ENCODE measurements at regions of chr17 and their contacts with region 1.

Region 1: DNA sequence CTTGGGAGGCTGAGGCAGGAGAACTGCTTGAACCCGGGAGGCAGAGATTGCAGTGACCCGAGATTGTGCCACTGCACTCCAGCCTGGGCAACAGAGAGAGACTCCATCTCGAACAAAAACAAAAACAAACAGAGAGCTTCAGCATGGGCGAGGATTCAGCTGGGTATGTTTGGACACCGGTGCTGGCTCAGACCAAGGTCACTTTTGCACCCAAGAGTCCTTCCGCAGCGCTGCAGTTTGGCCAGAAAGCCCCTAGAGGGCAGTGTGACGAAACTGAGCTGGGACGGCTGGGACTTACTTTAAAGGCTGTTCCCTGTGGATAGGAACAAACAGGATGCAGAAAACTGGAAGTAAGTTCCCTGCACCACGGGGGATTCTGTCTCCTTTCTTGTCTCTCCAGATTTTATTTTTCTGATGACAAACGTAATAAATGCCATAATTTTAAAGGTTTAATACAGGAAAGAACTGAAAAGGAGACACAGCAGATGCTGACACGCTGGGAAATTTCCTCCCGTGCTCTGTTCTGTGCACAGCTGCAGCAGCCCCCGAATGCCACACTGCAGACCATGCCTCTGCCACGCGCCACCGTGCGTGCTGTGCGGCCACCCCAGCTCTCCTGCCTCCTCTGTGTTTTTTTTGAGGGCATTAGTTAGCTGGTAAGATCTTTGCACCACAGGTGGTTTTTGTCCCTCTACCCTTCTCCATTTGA is 25.2 kb upstream of the USP36 start:
- DNase-seq: no peak
- H3K4me3 ChIP-seq: no peak overlapping the region
- CTCF ChIP-seq: peak; percentile 87

Region 2: GRCh38 chr17:78852709-78853121 is 13.1 kb before region 1 on chr17:
- CTCF ChIA-PET with region 1: interaction called, 17 read pairs
- POLR2A ChIA-PET with region 1: interaction called, 3 read pairs
- DNase-seq: no peak
- H3K4me3 ChIP-seq: no peak overlapping the region
- CTCF ChIP-seq: no peak

Region 3: DNA sequence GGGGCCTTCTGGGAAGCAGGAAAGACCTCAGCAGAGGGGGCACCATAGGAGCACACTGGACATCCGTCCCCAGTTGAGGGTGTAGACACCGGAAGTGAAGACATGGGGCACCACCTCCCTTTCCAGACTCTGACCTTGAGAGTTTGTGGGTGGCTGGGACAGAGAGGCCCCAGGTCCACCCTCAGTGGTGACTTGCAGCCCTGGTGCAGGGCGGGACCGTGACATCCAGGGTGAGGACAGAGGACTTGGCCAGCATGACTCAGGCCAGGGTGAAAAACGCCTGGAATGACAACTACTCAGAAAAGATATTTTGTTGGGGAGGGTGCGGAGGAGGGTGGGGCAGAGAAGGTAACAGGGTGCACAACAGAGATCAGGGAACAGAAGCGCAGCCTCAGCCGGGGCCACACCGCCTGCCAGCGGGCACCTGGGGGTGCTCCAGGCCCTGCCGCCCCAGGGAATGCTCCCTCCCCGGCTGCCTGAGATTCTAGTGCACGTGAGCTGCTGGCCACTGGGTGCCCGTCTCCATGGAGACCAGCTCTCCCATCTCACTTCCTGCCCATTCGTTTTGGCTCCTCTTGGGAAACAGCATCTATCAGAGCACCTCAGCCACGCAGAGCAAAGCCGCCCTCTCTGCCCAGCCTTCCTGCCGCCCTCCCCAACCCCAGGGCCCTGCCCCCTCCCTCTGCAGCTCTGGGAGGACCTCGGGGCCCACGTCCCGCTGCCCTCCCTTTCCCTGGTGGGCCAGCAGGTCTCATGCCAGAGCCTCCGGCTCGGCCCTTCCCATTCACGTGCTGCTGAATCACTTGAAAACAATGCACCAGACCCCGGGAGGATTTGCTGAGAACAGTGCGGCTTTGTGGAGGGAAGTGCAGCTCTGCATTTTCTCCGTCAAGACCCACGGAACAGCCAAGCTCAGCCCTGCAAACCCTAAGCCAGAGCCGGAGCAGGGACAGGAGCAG is 17.6 kb after region 1 on chr17:
- CTCF ChIA-PET with region 1: interaction called, 26 read pairs
- POLR2A ChIA-PET with region 1: interaction called, 4 read pairs
- DNase-seq: peak; percentile 75
- H3K4me3 ChIP-seq: peak overlapping the region; percentile 44
- CTCF ChIP-seq: no peak